IMR-90 (cell line): ENCODE measurements at regions of chr4 and their contacts with region 1.

Region 1: DNA sequence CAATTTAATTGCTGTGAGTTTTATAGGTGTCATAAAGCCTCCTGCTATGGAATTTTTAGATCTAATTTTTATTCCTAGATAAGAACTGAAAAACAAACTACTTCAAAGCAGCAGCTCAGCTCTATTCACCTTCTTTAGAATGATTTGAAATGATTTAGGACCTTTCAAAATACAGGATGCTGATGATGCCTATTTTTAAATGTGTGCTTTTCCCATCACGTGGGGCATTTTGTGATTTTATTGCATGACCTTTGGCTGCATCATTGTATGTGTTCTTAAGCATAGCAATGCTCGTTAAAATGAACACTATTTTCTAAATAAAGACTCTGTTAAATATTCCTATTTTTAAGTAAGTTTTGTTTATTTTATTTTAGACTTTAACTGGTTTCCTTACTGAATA is 537.3 kb downstream of the STPG2 start:
- DNase-seq: no peak
- ATAC-seq: no peak
- H3K4me3 ChIP-seq: no peak overlapping the region
- H3K27ac ChIP-seq: no peak overlapping the region
- H3K4me1 ChIP-seq: no peaks in the 10 kb centered on the region
- H3K27me3 ChIP-seq: no peaks in the 10 kb centered on the region
- CTCF ChIP-seq: no peak
- POLR2A ChIP-seq: no peak
- RAD21 ChIP-seq: no peak

Region 2: GRCh38 chr4:97174371-97174770 is 431.6 kb before region 1 on chr4:
- CTCF ChIA-PET with region 1: no interaction called
- POLR2A ChIA-PET with region 1: no interaction called
- dilution Hi-C with region 1: no loop called
- in situ Hi-C with region 1: no loop called
- intact Hi-C with region 1: loop called (anchors 5 kb)
- DNase-seq: no peak
- ATAC-seq: no peak
- H3K4me3 ChIP-seq: no peak overlapping the region
- H3K27ac ChIP-seq: no peak overlapping the region
- H3K4me1 ChIP-seq: no peaks in the 10 kb centered on the region
- H3K27me3 ChIP-seq: no peaks in the 10 kb centered on the region
- CTCF ChIP-seq: no peak
- POLR2A ChIP-seq: no peak
- RAD21 ChIP-seq: no peak

Region 3: GRCh38 chr4:97558204-97558804 is 47.6 kb before region 1 on chr4:
- CTCF ChIA-PET with region 1: no interaction called
- POLR2A ChIA-PET with region 1: no interaction called
- dilution Hi-C with region 1: no loop called
- in situ Hi-C with region 1: no loop called
- intact Hi-C with region 1: no loop called
- DNase-seq: no peak
- ATAC-seq: no peak
- H3K4me3 ChIP-seq: no peak overlapping the region
- H3K27ac ChIP-seq: no peak overlapping the region
- H3K4me1 ChIP-seq: no peaks in the 10 kb centered on the region
- H3K27me3 ChIP-seq: no peaks in the 10 kb centered on the region
- CTCF ChIP-seq: no peak
- POLR2A ChIP-seq: no peak
- RAD21 ChIP-seq: no peak